ENCODE measurements at regions of chr18 and their contacts with region 1.

Region 1: DNA sequence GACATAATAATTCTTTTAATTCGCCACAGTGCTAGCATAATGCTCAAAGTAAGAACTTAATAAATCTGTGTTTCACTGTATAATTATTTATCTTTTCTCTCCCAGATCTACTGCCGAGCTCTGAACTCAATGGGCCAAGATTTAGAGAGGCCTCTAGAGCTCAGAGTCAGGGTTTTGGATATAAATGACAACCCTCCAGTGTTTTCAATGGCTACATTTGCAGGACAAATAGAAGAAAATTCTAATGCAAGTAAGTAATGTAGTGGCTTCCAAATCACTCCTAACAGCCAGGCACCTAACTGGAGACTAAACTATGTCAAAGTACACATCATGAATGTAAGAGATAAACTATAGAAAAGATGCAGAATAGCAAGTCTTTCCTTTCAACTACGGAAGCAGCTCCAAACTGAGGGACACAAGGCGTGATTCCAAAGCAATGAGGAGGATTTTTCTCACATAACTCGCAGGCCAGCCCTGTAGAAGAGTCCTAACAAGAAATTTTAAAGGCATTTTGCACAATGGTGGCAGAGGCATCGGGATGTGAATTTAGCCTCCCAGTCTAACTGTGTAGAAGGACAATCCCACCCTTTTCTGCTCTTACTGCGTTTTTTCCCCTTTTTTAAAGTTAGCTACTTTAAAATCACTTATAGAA is 12.0 kb downstream of the DSG1 start:
- DNase-seq: no peak
- ATAC-seq: no peak
- H3K4me3 ChIP-seq: no peak overlapping the region
- H3K4me3 Mint-ChIP-seq: no peak overlapping the region
- H3K27ac ChIP-seq: no peak overlapping the region
- H3K27ac Mint-ChIP-seq: no peak overlapping the region
- H3K4me1 ChIP-seq: no peaks in the 10 kb centered on the region
- H3K4me1 Mint-ChIP-seq: no peaks in the 10 kb centered on the region
- H3K27me3 ChIP-seq: no peaks in the 10 kb centered on the region
- H3K27me3 Mint-ChIP-seq: no peaks in the 10 kb centered on the region
- CTCF ChIP-seq: no peak

Region 2: GRCh38 chr18:31386741-31387140 is 56.8 kb after region 1 on chr18:
- CTCF ChIA-PET with region 1: no interaction called
- POLR2A ChIA-PET with region 1: no interaction called
- intact Hi-C with region 1: loop called in 1 of 2 experiments (anchors 5 kb)
- DNase-seq: no peak
- ATAC-seq: no peak
- H3K4me3 ChIP-seq: no peak overlapping the region
- H3K4me3 Mint-ChIP-seq: no peak overlapping the region
- H3K27ac ChIP-seq: no peak overlapping the region
- H3K27ac Mint-ChIP-seq: no peak overlapping the region
- H3K4me1 ChIP-seq: no peaks in the 10 kb centered on the region
- H3K4me1 Mint-ChIP-seq: no peaks in the 10 kb centered on the region
- H3K27me3 ChIP-seq: no peaks in the 10 kb centered on the region
- H3K27me3 Mint-ChIP-seq: peaks cover 2% of the 10 kb centered on the region
- CTCF ChIP-seq: no peak

Region 3: GRCh38 chr18:31789409-31790055 is 459.6 kb after region 1 on chr18:
- CTCF ChIA-PET with region 1: no interaction called
- POLR2A ChIA-PET with region 1: no interaction called
- intact Hi-C with region 1: no loop called
- DNase-seq: no peak
- ATAC-seq: no peak
- H3K4me3 ChIP-seq: no peak overlapping the region
- H3K4me3 Mint-ChIP-seq: no peak overlapping the region
- H3K27ac ChIP-seq: no peak overlapping the region
- H3K27ac Mint-ChIP-seq: no peak overlapping the region
- H3K4me1 ChIP-seq: no peaks in the 10 kb centered on the region
- H3K4me1 Mint-ChIP-seq: no peaks in the 10 kb centered on the region
- H3K27me3 ChIP-seq: no peaks in the 10 kb centered on the region
- H3K27me3 Mint-ChIP-seq: no peaks in the 10 kb centered on the region
- CTCF ChIP-seq: no peak

Measured in CD8-positive, alpha-beta T cell (primary cell).